ENCODE measurements at regions of chr2 and their contacts with region 1.

Region 1: GRCh38 chr2:219119422-219120043 is 41.1 kb downstream of the NHEJ1 start:
- DNase-seq: peak; percentile 81
- ATAC-seq: peak; percentile 78
- H3K4me3 Mint-ChIP-seq: no peak overlapping the region
- H3K27ac Mint-ChIP-seq: no peak overlapping the region
- H3K4me1 Mint-ChIP-seq: peaks cover 21% of the 10 kb centered on the region
- H3K27me3 Mint-ChIP-seq: no peaks in the 10 kb centered on the region
- CTCF ChIP-seq: peak; percentile 59

Region 2: DNA sequence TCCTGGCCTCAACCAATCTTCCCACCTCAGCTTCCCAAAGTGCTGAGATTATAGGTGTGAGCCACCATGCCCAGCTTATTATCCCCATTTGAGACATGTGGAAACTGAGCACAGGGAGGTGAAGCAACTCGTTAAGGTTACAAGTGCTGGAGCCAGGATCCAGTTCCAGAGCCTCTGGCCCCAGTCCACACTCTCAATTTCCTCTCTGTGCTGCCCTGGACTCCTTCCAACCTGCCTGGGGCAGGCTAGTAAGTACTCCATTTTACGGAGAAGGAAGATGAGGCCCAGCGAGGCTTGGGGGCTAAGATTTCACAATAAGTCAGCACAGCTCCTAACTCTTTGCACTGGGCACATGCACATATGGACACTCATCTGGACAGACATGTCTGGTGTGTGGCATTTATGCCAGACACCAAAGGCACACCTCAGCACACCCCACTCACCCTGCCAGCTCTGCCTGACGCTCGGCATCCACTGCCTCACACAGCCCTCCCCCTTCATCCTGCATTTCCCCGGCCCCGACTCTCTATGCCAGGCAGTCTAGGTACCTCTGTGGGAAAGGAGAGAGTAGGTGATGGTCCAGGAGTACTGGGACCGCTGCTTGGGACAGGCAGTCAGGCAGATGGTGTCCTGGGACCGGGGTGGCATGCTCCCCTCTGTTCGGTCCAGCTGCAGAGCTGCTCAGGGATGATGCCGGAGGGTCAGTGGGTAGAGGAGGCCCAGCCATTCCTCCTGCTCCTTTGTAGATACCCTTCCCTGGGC is 98.7 kb before region 1 on chr2:
- CTCF ChIA-PET with region 1: interaction called, 11 read pairs
- POLR2A ChIA-PET with region 1: no interaction called
- DNase-seq: no peak
- ATAC-seq: no peak
- H3K4me3 Mint-ChIP-seq: no peak overlapping the region
- H3K27ac Mint-ChIP-seq: no peak overlapping the region
- H3K4me1 Mint-ChIP-seq: 0 out of 2 replicates have a peak, but pooled peaks cover 2% of the 10 kb centered on the region
- H3K27me3 Mint-ChIP-seq: no peaks in the 10 kb centered on the region; the same call in 1 of the 2 replicates
- CTCF ChIP-seq: no peak

Region 3: DNA sequence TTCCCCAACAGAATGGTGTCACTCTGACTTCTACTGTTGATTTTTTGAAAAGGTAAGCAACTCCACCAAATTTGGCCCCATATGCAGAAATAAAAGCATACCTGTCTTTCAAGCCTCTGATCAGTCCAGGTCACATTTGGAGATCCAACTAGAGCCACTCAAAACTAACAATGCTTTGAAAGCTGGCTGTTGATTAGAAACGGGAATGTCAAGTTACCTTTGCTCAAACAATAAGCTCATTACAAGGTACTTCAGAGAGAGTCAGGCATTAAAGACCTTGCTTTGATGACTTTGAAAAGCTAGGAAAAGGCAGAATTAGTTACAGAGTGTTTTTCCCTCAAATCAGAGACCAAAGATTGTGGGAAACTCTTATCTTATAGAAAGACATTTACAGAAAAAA is 54.0 kb before region 1 on chr2:
- CTCF ChIA-PET with region 1: interaction called, 198 read pairs
- POLR2A ChIA-PET with region 1: no interaction called
- DNase-seq: no peak
- ATAC-seq: no peak
- H3K4me3 Mint-ChIP-seq: no peak overlapping the region
- H3K27ac Mint-ChIP-seq: no peak overlapping the region
- H3K4me1 Mint-ChIP-seq: peaks cover 20% of the 10 kb centered on the region
- H3K27me3 Mint-ChIP-seq: peaks cover 48% of the 10 kb centered on the region
- CTCF ChIP-seq: no peak

Region 4: DNA sequence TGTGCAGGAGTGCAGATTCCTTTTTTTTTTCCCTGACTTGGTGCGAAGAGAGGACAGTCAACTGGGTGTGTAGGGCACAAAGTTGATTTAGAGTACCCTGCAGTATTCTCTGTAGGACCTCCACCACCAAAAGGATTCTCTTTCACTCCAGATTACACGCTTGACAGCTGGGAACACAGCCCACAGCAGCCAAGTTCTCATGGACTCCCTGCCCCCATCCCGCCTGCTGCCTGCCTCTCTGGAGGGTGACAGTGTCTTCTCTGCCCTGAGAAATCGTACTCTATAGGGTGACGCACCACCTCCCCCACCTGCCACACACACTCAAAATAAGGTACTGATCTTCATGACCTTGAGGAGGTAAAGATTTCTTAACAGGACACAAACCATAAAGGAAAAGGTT is 32.2 kb before region 1 on chr2:
- CTCF ChIA-PET with region 1: interaction called, 14 read pairs
- POLR2A ChIA-PET with region 1: no interaction called
- DNase-seq: no peak
- ATAC-seq: no peak; the same call in 1 of the 2 replicates
- H3K4me3 Mint-ChIP-seq: no peak overlapping the region
- H3K27ac Mint-ChIP-seq: no peak overlapping the region
- H3K4me1 Mint-ChIP-seq: peaks cover 19% of the 10 kb centered on the region
- H3K27me3 Mint-ChIP-seq: no peaks in the 10 kb centered on the region
- CTCF ChIP-seq: no peak

Region 5: DNA sequence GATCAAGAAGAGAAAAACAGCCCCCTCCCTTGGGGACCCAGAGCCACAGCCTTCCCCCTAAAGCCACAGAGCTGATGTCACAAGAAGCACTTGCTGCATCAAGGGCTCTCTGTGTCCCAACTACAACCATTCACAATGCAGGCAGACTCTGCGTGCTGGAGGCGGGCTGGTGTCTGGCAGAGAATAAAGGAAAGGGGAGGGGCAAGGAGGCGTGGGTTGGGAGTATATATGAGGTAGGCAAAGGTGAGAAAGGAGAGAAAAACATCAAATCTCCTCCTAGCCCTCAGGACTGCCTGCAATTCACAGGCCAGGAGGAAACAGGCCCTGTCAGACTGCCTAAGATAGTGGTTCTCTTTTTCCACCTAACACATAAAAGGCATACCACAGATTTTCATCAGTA is 10.1 kb before region 1 on chr2:
- CTCF ChIA-PET with region 1: interaction called, 62 read pairs
- POLR2A ChIA-PET with region 1: no interaction called
- DNase-seq: peak; percentile 72
- ATAC-seq: peak; percentile 99
- H3K4me3 Mint-ChIP-seq: no peak overlapping the region
- H3K27ac Mint-ChIP-seq: no peak overlapping the region
- H3K4me1 Mint-ChIP-seq: peaks cover 9% of the 10 kb centered on the region
- H3K27me3 Mint-ChIP-seq: no peaks in the 10 kb centered on the region
- CTCF ChIP-seq: no peak

Region 6: DNA sequence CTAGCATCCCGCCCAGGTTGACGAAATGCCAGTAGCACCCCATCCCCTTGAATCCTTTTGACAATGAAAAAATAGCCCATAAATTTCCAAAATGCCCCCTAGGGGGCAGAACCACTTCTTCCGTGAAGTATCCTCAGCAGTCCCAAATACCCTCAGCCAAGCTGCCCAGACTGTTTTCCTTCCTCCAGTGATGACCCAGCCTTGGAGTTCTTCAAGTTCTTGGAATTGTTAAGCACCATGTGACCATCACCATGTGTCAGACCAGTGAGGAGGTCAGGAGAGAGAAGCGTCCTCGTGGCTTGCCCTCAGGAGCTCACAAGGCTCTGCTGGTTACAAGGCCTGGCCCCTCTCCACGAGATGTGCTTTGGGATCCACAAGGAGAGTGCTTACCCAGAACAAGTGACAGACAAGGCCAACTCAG is 51.7 kb after region 1 on chr2:
- CTCF ChIA-PET with region 1: no interaction called
- POLR2A ChIA-PET with region 1: no interaction called
- DNase-seq: peak; percentile 23
- ATAC-seq: peak; percentile 74
- H3K4me3 Mint-ChIP-seq: no peak overlapping the region
- H3K27ac Mint-ChIP-seq: peak overlapping the region; percentile 88
- H3K4me1 Mint-ChIP-seq: peaks cover 9% of the 10 kb centered on the region; the same call in 1 of the 2 replicates
- H3K27me3 Mint-ChIP-seq: no peaks in the 10 kb centered on the region
- CTCF ChIP-seq: peak; percentile 46; the same call in 1 of the 2 replicates

Region 7: DNA sequence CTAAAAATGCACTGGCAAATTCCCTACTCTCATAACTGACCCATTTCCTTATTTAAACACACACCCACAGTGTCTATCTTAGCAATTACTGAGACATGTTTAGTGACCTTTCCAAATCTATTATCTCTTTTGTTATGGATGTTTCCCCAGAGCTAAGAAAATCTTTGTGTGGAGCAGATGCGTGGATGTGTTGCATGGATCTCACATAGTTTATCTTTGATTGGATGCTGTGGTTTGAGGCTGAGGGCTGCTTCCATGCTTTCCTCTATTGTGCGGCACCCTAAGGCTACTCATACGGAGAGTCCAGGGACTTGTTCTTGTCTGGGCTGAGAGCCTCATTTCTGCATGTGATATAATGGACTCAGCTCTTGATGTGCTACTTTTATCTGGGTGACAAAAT is 114.8 kb after region 1 on chr2:
- CTCF ChIA-PET with region 1: no interaction called
- POLR2A ChIA-PET with region 1: no interaction called
- DNase-seq: no peak
- ATAC-seq: no peak
- H3K4me3 Mint-ChIP-seq: no peak overlapping the region
- H3K27ac Mint-ChIP-seq: no peak overlapping the region
- H3K4me1 Mint-ChIP-seq: peaks cover 5% of the 10 kb centered on the region
- H3K27me3 Mint-ChIP-seq: no peaks in the 10 kb centered on the region
- CTCF ChIP-seq: no peak

Region 8: GRCh38 chr2:219279517-219280516 is 160.3 kb after region 1 on chr2:
- CTCF ChIA-PET with region 1: no interaction called
- POLR2A ChIA-PET with region 1: no interaction called
- DNase-seq: peak; percentile 55
- ATAC-seq: peak; percentile 20
- H3K4me3 Mint-ChIP-seq: peak overlapping the region; percentile 88
- H3K27ac Mint-ChIP-seq: peak overlapping the region; percentile 86
- H3K4me1 Mint-ChIP-seq: peaks cover 26% of the 10 kb centered on the region
- H3K27me3 Mint-ChIP-seq: peaks cover 4% of the 10 kb centered on the region; the same call in 1 of the 2 replicates
- CTCF ChIP-seq: no peak